ENCODE measurements at regions of chr11 and their contacts with region 1.

Region 1: DNA sequence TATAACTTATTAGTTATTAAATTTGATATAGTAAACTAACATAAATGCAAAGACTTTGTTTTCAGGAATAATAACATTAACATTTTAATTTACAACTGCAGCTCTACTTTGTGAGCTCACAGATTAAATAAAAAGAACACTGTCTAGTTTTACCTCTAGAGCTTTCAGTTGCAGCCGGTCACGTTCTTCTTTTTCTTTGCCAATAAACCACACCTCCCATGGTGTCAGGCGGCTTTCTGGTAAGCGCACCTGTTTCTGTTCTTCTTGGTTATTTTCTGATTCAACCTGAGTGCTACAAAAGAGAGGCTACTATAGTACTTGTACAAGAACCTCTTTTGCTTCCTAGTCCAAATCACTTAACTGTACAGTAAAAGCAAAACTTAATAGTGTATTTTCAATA is 5.8 kb downstream of the CCDC34 start:
- DNase-seq: peak; percentile 48 to 59
- H3K4me3 ChIP-seq: no peak overlapping the region
- H3K27ac ChIP-seq: no peak overlapping the region
- H3K4me1 ChIP-seq: peaks cover 5% of the 10 kb centered on the region in 2 donors
- H3K27me3 ChIP-seq: no peaks in the 10 kb centered on the region
- CTCF ChIP-seq: no peak
- POLR2A ChIP-seq: no peak

Region 2: DNA sequence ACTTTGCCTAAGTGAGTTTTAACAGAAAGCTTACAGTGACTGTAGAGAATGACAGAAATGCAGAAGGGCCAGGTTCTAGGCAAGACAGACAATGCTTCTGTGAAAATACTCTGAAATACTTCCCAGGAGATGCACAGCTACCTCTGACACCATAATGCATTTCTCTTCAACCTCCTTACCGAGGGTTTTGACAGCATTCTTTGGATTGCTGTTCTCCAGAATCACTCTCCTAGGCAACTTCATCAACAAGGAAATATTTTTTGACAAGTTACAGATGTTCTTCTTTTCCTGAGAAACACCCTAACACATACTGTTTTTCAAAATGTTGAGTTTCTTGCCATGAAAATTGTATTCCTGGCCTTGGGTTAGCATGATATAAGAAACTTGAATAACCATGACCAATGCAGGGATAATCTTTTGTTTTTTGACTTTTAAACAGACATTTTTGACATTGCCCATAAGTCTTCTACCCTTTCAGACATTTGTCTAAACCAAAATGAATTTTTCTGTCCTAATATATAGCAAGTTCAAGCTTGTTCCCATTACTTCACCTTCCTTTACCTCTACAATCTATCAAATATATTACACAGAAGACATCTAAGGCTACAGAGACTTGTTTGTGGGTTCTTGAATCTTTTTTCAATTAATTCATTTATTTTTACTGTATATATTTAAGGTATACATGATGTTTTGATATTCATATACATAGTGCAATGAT is 102.4 kb before region 1 on chr11:
- intact Hi-C with region 1: no loop called
- DNase-seq: no peak
- H3K4me3 ChIP-seq: no peak overlapping the region
- H3K27ac ChIP-seq: no peak overlapping the region
- H3K4me1 ChIP-seq: no peaks in the 10 kb centered on the region
- H3K27me3 ChIP-seq: no peaks in the 10 kb centered on the region
- CTCF ChIP-seq: no peak
- POLR2A ChIP-seq: no peak

Region 3: DNA sequence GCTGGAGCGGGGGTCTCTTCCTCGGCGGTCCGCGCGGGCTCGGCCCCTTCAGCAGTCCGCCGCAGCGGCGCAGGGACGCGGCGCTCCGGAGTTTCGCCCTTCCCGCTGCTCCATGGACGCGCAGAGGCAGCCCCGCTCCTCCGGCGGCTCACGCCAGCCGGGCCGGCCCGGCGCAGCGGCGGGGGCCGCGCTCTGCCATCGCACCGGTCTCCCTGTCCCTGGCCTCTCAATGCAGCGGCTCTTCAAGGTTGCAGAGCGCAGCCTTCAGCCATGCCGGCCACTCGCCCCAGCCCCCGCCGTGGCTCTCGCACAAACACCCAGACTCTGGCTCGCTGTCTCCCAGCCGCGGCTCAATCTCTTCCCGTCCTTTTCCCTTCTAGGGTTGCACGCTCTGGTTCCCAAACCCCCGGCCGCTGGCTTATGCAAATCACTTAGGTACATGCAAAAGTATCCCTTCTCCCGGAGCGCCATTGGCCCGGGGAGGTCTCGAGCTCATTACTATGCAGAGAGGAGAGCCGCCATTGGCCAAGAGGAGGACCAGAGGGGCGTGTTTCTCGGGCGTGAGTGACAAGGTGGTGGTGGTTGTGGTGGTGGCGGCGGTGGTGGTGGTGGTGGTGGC is 115.3 kb after region 1 on chr11 and contains the start of gene LGR4:
- intact Hi-C with region 1: loop called (anchors 5 kb)
- DNase-seq: peak; percentile 97 to 98
- H3K4me3 ChIP-seq: peak within 1 kb of the TSS; percentile 56 to 75 (median 58)
- H3K27ac ChIP-seq: peak within 1 kb of the TSS; percentile 85 to 90 (median 87)
- H3K4me1 ChIP-seq: peaks cover 32 to 37% of the 10 kb centered on the region in 2 donors
- H3K27me3 ChIP-seq: no peaks in the 10 kb centered on the region
- CTCF ChIP-seq: no peak
- POLR2A ChIP-seq: peak in 1 of 2 donors; percentile 97
- total RNA-seq, gene LGR4: 40.8 to 62.1 (median 50.2) TPM